B cell (primary cell): ENCODE measurements at regions of chr3 and their contacts with region 1.

Region 1: DNA sequence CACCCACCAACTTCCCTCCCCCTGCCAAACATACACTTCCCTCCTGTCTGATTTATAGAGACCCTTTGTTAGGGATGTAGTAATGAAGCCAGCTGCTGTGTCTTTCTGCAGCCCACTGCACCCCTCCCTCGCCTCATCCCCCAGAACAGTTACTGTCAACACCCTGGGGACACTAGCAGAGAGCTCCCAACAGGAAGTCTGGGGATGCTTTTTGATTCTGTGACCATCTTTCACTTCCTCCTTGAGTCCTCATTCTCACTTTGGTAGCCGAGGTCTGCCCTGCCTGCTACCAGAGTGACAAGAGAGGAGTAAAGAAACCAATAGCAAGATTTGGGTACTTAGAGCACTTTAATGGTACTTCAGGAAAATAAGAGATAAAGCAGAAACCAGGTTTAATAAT is 201.6 kb downstream of the SATB1 start:
- DNase-seq: peak; percentile 84
- ATAC-seq: peak; percentile 89
- H3K4me3 ChIP-seq: peak overlapping the region; percentile 16 to 56 (median 38)
- H3K4me3 Mint-ChIP-seq: peak overlapping the region; percentile 75
- H3K27ac ChIP-seq: peak overlapping the region; percentile 50 to 67
- H3K27ac Mint-ChIP-seq: peak overlapping the region; percentile 82
- H3K4me1 ChIP-seq: peaks cover 56 to 70% of the 10 kb centered on the region in 2 donors
- H3K4me1 Mint-ChIP-seq: peaks cover 69% of the 10 kb centered on the region
- H3K27me3 ChIP-seq: no peaks in the 10 kb centered on the region
- H3K27me3 Mint-ChIP-seq: no peaks in the 10 kb centered on the region
- CTCF ChIP-seq: no peak

Region 2: DNA sequence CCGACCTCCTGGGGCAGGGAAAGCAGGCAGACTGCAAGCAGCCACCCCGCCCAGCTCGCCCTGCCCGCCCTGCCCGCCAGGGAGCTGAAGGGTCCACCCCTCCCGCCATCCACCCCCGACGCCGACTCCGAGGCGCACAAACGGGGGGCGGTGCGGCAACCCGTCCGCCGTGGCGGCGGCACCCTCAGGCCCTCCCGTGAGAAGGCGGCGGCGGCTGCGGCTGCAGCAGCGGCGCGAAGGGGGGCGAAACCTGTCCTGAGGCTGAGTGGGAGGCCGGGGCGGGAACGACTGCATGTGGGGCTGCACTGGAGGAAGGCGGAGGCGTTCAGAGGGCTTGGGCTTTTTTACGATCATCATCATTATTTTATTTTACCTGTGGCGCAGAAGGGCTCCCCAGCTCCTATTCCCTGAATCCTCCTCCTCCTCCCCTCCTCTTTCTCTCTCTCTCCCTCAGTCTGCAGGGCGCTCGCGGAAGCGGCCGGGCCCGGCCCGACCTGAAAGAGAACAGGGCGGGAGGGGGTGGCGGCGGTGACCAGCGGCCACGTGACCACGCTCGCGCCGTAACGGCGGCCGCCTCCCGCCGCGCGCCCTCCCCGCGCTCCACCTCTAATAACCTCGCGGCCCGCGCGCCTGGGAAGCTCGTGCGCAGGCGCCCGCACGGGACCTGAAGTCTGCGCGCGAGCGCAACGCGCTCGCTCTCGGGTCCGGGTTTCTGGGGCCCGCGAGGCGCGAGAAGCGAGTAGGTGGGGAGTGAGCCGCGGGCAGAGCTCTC is 481.3 kb before region 1 on chr3 and contains the start of gene TBC1D5:
- CTCF ChIA-PET with region 1: no interaction called
- POLR2A ChIA-PET with region 1: no interaction called
- intact Hi-C with region 1: loop called (anchors 10 kb)
- DNase-seq: peak; percentile 97
- ATAC-seq: peak; percentile 85
- H3K4me3 ChIP-seq: peak within 1 kb of the TSS; percentile 81 to 84 (median 83)
- H3K4me3 Mint-ChIP-seq: peak within 1 kb of the TSS; percentile 96
- H3K27ac ChIP-seq: peak within 1 kb of the TSS; percentile 89 to 93
- H3K27ac Mint-ChIP-seq: peak within 1 kb of the TSS; percentile 98
- H3K4me1 ChIP-seq: peaks cover 43 to 49% of the 10 kb centered on the region in 2 donors
- H3K4me1 Mint-ChIP-seq: peaks cover 65% of the 10 kb centered on the region
- H3K27me3 ChIP-seq: no peaks in the 10 kb centered on the region
- H3K27me3 Mint-ChIP-seq: no peaks in the 10 kb centered on the region
- CTCF ChIP-seq: no peak
- total RNA-seq, gene TBC1D5: 111 and 112 TPM in 2 replicates

Region 3: GRCh38 chr3:18127174-18127858 is 96.3 kb before region 1 on chr3:
- CTCF ChIA-PET with region 1: interaction called, 5 read pairs
- POLR2A ChIA-PET with region 1: interaction called, 3 read pairs
- intact Hi-C with region 1: loop called (anchors 2 kb)
- DNase-seq: peak; percentile 87
- ATAC-seq: peak; percentile 96
- H3K4me3 ChIP-seq: peak overlapping the region in 3 of 5 experiments; percentile 15 to 30 (median 25)
- H3K4me3 Mint-ChIP-seq: peak overlapping the region; percentile 35
- H3K27ac ChIP-seq: peak overlapping the region; percentile 57 to 72
- H3K27ac Mint-ChIP-seq: peak overlapping the region; percentile 91
- H3K4me1 ChIP-seq: peaks cover 30 to 32% of the 10 kb centered on the region in 2 donors
- H3K4me1 Mint-ChIP-seq: peaks cover 31% of the 10 kb centered on the region
- H3K27me3 ChIP-seq: no peaks in the 10 kb centered on the region
- H3K27me3 Mint-ChIP-seq: no peaks in the 10 kb centered on the region
- CTCF ChIP-seq: peak; percentile 20

Region 4: DNA sequence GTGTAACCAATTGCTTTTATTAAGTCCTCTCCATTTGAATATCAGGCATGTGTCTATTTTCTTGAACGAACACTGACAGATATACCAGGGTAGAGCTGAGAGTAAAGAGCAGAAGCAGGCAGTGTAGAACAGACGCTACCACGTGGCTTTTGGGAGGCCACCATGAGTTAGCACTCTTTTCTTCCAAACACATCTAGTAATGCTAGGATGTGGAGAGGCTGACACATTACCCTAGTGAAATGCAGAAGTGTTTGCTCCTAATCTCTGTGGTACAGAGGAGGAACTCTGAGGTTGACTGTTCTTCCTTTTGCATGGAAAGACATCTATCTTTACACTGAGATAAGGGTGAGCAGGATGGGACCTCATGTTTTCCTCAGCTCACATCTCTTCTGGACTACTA is 14.7 kb before region 1 on chr3:
- CTCF ChIA-PET with region 1: no interaction called
- POLR2A ChIA-PET with region 1: no interaction called
- intact Hi-C with region 1: loop called (anchors 1 kb)
- DNase-seq: no peak
- ATAC-seq: no peak
- H3K4me3 ChIP-seq: no peak overlapping the region
- H3K4me3 Mint-ChIP-seq: no peak overlapping the region
- H3K27ac ChIP-seq: no peak overlapping the region
- H3K27ac Mint-ChIP-seq: no peak overlapping the region
- H3K4me1 ChIP-seq: peaks cover 3 to 4% of the 10 kb centered on the region in 2 donors
- H3K4me1 Mint-ChIP-seq: peaks cover 9% of the 10 kb centered on the region
- H3K27me3 ChIP-seq: no peaks in the 10 kb centered on the region
- H3K27me3 Mint-ChIP-seq: peaks cover 13% of the 10 kb centered on the region
- CTCF ChIP-seq: no peak